Spleen (tissue), 13 donors: ENCODE measurements at regions of chr16 and their contacts with region 1.

Region 1: GRCh38 chr16:58336332-58337089 is 41.7 kb upstream of the PRSS54 start:
- DNase-seq: peak; percentile 89
- H3K4me3 ChIP-seq: peak overlapping the region in 3 of 8 donors; percentile 5 to 45 (median 10)
- H3K27ac ChIP-seq: no peak overlapping the region
- H3K4me1 ChIP-seq: peaks cover 0 to 11% (median 8%) of the 10 kb centered on the region in 6 donors
- H3K27me3 ChIP-seq: peaks cover 0 to 4% (median 0%) of the 10 kb centered on the region in 7 donors
- CTCF ChIP-seq: peak; percentile 74 to 93 (median 90)
- POLR2A ChIP-seq: no peak

Region 2: GRCh38 chr16:57916735-57917451 is 419.6 kb before region 1 on chr16:
- intact Hi-C with region 1: no loop called
- DNase-seq: no peak
- H3K4me3 ChIP-seq: no peak overlapping the region
- H3K27ac ChIP-seq: no peak overlapping the region
- H3K4me1 ChIP-seq: no peaks in the 10 kb centered on the region
- H3K27me3 ChIP-seq: peaks cover 0 to 5% (median 0%) of the 10 kb centered on the region in 7 donors
- CTCF ChIP-seq: no peak
- POLR2A ChIP-seq: no peak

Region 3: DNA sequence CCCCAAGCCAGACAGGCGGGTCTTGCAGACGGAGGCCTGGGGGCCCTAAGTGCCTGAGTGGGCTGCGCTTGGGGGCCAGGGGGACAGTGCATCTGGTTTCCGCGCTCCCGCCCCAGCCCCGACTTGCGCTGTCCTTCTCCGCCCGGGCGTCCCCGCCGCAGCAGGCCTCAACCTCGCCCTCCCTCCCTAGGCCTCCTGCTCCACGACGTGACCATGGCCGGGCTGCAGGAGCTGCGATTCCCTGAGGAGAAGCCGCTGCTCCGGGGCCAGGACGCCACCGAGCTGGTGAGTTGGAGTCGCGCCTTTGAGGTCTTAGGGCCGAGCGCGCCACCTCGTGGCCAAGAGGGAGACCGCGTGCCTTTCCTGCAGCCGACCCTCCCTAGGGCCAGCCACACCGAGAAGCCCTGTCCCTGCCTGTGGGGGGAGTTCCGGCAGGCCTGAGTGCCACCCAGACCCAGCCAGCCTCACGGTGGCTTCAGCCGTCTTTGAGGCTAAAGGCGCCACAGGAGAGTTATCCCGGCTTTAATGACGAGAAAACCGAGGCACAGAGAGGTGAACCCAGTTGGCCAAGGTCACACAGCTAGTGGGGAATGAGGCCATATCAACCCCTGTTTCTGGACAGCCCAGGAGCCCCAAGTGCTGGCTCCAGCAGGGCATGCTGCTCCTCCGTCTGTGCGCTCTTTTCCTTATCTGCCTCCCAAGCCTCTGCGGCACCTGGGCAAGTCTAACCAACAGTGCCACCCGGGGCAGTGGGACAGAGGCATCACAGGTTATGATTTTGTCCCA is 151.2 kb after region 1 on chr16:
- intact Hi-C with region 1: loop called (anchors 2 kb)
- DNase-seq: peak; percentile 93
- H3K4me3 ChIP-seq: peak overlapping the region in 3 of 8 donors; percentile 15 to 45 (median 27)
- H3K27ac ChIP-seq: no peak overlapping the region
- H3K4me1 ChIP-seq: peaks cover 4 to 10% (median 8%) of the 10 kb centered on the region in 6 donors
- H3K27me3 ChIP-seq: peaks cover 0 to 17% (median 0%) of the 10 kb centered on the region in 7 donors
- CTCF ChIP-seq: peak; percentile 77 to 96 (median 92)
- POLR2A ChIP-seq: no peak

Region 4: GRCh38 chr16:58755989-58756649 is 419.6 kb after region 1 on chr16:
- intact Hi-C with region 1: loop called (anchors 5 kb)
- DNase-seq: peak; percentile 87
- H3K4me3 ChIP-seq: peak overlapping the region in 3 of 8 donors; percentile 5 to 36 (median 13)
- H3K27ac ChIP-seq: peak overlapping the region in 2 of 8 donors; percentile 29 to 33
- H3K4me1 ChIP-seq: peaks cover 3 to 11% (median 9%) of the 10 kb centered on the region in 6 donors
- H3K27me3 ChIP-seq: no peaks in the 10 kb centered on the region
- CTCF ChIP-seq: peak; percentile 19 to 80 (median 58)
- POLR2A ChIP-seq: no peak